Endothelial cell of umbilical vein (primary cell): ENCODE measurements at regions of chr15 and their contacts with region 1.

Region 1: GRCh38 chr15:73950831-73951561 is 24.7 kb downstream of the LOXL1 start:
- DNase-seq: peak; percentile 98
- H3K4me3 ChIP-seq: no peak overlapping the region
- H3K27ac ChIP-seq: peak overlapping the region; percentile 84
- H3K4me1 ChIP-seq: peaks cover 9% of the 10 kb centered on the region
- H3K27me3 ChIP-seq: no peaks in the 10 kb centered on the region
- CTCF ChIP-seq: peak; percentile 94 to 95
- POLR2A ChIP-seq: peak; percentile 32

Region 2: DNA sequence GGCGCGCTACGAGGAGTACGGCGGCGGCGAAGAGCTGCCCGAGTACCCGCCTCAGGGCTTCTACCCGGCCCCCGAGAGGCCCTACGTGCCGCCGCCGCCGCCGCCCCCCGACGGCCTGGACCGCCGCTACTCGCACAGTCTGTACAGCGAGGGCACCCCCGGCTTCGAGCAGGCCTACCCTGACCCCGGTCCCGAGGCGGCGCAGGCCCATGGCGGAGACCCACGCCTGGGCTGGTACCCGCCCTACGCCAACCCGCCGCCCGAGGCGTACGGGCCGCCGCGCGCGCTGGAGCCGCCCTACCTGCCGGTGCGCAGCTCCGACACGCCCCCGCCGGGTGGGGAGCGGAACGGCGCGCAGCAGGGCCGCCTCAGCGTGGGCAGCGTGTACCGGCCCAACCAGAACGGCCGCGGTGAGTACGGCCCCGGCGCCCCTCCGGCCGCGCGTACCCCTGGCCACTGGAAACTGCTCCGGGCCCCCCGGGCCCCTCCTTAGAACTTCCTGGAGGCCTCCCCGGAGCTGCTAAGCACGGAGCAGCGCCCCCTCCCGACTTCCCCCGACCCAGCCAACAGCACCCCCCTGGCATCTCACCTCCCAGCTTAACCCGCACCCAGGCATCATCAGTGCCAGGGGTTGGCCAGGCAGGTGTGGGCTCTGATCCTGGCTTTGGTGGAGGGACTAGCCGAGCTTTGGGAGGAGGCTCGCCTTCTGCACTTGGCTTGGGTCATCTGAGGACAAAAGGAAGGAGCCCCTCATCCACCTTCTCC is 23.3 kb before region 1 on chr15:
- CTCF ChIA-PET with region 1: interaction called, 9 read pairs
- POLR2A ChIA-PET with region 1: no interaction called
- dilution Hi-C with region 1: no loop called
- intact Hi-C with region 1: loop called (anchors 1 kb)
- DNase-seq: peak; percentile 45
- H3K4me3 ChIP-seq: peak overlapping the region in 1 of 3 experiments; percentile 45
- H3K27ac ChIP-seq: no peak overlapping the region
- H3K4me1 ChIP-seq: peaks cover 24% of the 10 kb centered on the region
- H3K27me3 ChIP-seq: no peaks in the 10 kb centered on the region
- CTCF ChIP-seq: peak; percentile 28 to 51
- POLR2A ChIP-seq: no peak

Region 3: GRCh38 chr15:73972984-73973682 is 22.1 kb after region 1 on chr15:
- CTCF ChIA-PET with region 1: interaction called, 217 read pairs
- POLR2A ChIA-PET with region 1: no interaction called
- dilution Hi-C with region 1: no loop called
- intact Hi-C with region 1: no loop called
- DNase-seq: peak; percentile 81
- H3K4me3 ChIP-seq: no peak overlapping the region
- H3K27ac ChIP-seq: no peak overlapping the region
- H3K4me1 ChIP-seq: peaks cover 15% of the 10 kb centered on the region
- H3K27me3 ChIP-seq: no peaks in the 10 kb centered on the region
- CTCF ChIP-seq: peak; percentile 86 to 89
- POLR2A ChIP-seq: no peak

Region 4: DNA sequence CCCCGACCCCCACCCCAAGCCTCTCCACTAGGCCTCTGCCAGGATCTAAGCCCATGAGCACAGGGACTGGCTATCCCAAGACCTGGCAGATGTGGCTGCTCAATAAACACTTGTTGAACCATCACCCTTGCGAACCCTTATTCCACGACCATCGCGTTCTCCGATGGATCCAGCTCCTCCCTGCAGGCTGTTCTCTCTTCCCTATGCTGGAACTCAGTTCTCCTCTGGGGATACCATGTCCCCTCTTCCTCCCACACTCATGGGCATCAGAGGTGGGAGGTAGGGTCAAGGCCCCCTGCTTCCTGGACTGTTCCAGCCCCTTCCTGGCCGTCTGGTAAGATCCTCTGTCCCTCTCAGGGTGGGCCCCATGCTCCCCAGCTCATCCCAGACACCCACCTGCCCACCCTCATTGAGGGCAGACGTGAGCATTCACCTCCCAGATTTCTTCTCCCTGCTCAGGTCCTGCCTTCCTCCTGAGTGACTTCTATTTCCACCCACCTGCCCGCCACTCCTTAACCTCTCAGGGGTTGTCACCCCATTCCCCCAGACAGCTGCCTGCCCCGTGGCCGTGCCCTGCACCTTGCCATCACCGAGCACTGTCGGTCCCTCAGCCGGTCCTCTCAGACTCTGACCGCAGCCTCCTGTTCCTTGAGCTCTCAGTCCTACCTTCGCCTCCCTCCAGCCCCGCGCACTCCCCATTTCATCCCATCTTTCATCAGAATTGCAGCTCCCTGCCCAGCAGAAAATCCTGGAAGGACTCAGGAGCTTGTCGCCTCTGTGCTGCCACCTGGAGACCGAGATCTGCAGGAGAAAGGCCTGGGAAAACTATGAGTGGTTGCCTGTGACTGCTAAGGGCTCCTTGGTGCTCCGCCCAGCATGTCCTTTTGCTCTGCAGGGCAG is 85.5 kb after region 1 on chr15:
- CTCF ChIA-PET with region 1: interaction called, 34 read pairs
- POLR2A ChIA-PET with region 1: no interaction called
- dilution Hi-C with region 1: no loop called
- intact Hi-C with region 1: loop called (anchors 1 kb)
- DNase-seq: peak; percentile 59
- H3K4me3 ChIP-seq: no peak overlapping the region
- H3K27ac ChIP-seq: no peak overlapping the region
- H3K4me1 ChIP-seq: peaks cover 9% of the 10 kb centered on the region
- H3K27me3 ChIP-seq: no peaks in the 10 kb centered on the region
- CTCF ChIP-seq: peak; percentile 53 to 76
- POLR2A ChIP-seq: no peak

Region 5: DNA sequence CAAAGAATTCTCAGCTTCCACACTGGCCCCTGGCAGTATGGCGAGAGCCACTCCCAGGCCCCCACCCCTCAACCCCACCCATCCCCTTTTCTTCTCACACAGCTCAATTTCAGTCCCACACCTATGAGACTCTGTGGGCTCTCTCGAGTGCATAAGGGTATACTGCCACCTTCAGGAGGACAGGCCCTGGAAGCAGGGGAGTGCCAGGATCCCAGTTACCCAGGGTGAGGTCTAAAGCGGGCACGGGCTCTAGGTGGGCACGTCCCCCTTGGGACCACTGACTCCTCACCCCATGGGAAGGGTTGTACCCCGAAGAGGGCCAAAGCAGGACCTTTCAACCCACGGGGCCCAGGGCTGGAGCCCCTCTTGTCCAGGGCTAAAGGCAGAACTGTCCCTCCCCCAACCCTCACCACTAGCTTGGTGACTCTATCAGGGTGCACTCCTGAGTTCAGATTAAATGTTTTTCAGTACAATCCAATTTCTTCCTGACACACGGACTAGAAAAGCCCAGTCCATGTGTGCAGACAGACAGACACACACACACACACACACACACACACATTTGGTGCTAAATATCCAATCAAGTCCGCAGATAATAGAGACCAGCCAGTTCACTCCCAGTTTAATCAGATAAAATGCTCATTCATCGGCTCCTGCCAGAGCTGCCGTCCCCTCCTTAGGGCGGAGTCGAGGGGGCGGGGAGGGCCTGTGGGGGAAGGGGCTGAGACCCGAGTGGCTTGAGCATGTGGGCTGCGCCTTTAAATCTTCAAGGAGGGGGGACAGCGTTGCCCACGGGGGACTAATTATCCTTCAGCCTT is 357.0 kb after region 1 on chr15:
- CTCF ChIA-PET with region 1: interaction called, 18 read pairs
- POLR2A ChIA-PET with region 1: no interaction called
- dilution Hi-C with region 1: no loop called
- intact Hi-C with region 1: loop called (anchors 5 kb)
- DNase-seq: peak; percentile 43
- H3K4me3 ChIP-seq: no peak overlapping the region
- H3K27ac ChIP-seq: no peak overlapping the region
- H3K4me1 ChIP-seq: no peaks in the 10 kb centered on the region
- H3K27me3 ChIP-seq: peaks cover 18 to 31% of the 10 kb centered on the region in 2 experiments
- CTCF ChIP-seq: peak; percentile 55 to 74
- POLR2A ChIP-seq: no peak